BJ (cell line): ENCODE measurements at regions of chr21 and their contacts with region 1.

Region 1: GRCh38 chr21:38755681-38756371 is 49.9 kb upstream of the ETS2 start:
- DNase-seq: peak; percentile 95
- H3K4me3 ChIP-seq: no peak overlapping the region
- H3K27me3 ChIP-seq: no peaks in the 10 kb centered on the region
- CTCF ChIP-seq: no peak

Region 2: DNA sequence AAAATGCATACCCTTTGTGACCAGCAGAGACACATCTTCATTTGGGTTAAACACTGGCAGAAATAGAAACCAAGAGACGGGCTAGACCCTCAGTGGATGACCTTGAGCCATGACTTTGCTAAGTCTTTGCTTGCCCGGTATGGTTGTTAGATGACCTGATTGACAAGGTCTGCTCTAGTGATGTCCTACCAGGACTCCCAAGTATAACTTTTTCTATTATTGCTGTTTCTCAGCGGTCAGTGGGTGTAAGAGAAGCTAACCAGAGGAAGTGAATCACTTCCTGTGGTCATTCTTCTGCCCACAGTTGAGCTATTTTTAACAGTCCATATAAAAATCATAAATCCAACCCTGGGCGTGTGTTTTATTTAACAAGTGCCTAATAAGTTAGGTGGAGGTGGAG is 76.3 kb before region 1 on chr21:
- CTCF ChIA-PET with region 1: no interaction called
- POLR2A ChIA-PET with region 1: no interaction called
- DNase-seq: peak; percentile 26
- H3K4me3 ChIP-seq: no peak overlapping the region
- H3K27me3 ChIP-seq: peaks cover 32% of the 10 kb centered on the region
- CTCF ChIP-seq: no peak

Region 3: DNA sequence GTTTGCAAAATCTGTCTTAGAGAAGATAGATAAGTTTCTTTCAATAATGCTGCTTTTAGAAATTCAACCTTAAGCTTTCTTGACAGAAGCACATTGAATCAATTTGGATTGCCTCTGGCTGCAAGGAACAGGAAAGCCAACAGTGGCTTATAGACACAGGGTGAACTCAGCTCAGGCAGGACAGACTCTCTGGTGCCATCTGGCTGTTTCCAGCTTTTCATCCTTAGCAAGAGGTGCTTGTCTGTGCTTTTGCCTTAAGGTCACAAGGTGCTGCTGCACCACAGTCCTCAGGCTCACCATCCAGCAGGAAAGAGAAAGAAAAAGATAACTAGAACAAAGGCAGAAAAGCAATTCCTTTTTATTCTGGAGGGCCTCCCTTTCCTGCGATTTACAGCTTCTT is 43.8 kb before region 1 on chr21:
- CTCF ChIA-PET with region 1: no interaction called
- POLR2A ChIA-PET with region 1: no interaction called
- DNase-seq: no peak
- H3K4me3 ChIP-seq: no peak overlapping the region
- H3K27me3 ChIP-seq: peaks cover 11% of the 10 kb centered on the region
- CTCF ChIP-seq: peak; percentile 62

Region 4: DNA sequence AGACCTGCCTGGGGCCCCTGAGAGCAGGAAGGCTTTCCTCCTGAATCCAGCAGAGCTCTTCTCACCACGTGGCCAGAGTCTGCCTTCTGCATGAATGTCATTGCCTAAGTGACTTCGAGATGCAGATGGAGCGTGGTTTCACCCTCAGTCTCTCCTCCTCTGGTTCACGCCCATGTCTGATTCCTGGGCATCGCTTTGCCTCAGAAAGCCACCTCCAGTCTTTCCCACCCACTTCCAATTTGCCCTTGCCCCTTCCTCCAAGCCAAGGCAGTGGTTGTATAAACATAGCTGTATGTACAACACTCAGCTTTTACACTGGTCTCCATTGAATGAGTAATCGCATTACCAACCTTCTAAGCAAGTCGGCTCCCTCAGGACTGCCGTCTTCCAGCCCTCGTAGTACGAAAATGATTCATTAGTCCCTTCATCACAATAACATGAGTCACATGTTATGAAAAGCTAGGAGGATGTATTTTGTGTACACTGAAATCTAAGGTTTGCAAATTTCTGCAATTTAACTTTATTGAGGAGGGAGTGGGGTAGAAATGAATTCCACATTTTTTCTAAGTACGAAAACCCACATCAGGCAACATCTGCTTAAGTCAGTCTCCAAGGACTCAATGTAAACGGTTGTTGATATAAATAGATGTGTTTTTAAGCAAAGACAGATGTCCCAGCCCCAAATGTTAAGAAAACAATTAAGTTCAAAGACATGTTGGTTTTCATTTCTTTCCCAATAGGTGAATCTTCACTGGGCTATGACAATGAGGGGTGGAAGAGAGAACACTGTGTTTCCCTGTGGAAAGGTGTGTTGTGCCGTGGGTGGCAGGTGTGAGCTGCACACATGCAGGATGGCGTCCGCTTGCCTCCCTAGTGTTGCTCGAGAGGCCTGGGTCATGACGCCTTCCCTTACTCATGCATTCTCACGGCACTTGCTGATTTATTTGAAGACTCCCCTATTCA is 17.6 kb after region 1 on chr21:
- CTCF ChIA-PET with region 1: interaction called, 5 read pairs
- POLR2A ChIA-PET with region 1: interaction called, 13 read pairs
- DNase-seq: peak; percentile 98
- H3K4me3 ChIP-seq: no peak overlapping the region
- H3K27me3 ChIP-seq: no peaks in the 10 kb centered on the region
- CTCF ChIP-seq: no peak